GM12878 (cell line): ENCODE measurements at regions of chr1 and their contacts with region 1.

Region 1: DNA sequence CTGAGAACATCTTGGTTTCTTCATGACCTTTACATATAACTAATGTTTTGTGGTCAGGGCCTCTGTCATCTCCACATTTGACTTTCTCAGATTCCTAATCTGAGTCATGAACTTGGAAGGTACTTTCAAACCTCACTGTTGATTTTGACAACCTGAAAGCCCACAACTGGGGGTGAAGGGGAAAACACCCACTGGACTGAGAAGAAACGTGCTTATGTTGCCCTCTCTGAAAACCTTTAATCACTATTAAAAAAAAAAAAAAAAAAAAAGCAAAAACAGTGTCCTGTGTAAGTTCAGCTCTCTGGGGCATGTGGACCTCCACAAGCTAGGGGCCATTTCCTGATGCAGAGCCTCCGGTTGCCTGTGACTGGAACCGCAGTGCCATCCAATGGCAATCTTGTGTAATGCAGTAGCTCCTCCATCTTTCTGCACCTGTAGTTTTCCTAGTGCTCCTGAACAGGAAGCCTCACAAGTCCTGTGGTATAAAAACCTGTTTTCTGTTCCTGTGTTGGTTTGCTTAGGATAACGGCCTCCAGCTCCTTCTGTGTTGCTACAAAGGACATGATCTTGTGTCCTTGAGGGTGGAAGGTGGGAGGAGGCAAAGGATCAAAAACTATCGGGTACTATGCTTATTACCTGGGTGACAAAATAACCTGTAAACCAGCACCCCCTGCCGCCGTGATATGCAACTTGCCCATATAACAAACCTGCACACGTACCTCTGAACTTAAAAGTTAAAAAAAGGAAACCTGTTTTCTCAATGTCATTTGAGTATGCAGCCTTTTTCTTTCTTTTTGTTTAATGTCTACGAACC is 124.5 kb downstream of the ZNF648 start:
- DNase-seq: peak; percentile 86
- ATAC-seq: peak; percentile 90
- H3K4me3 ChIP-seq: no peak overlapping the region
- H3K27ac ChIP-seq: peak overlapping the region; percentile 82
- H3K4me1 ChIP-seq: peaks cover 16% of the 10 kb centered on the region
- H3K27me3 ChIP-seq: no peaks in the 10 kb centered on the region
- CTCF ChIP-seq: peak; percentile 83 to 91 (median 84)
- EP300 ChIP-seq: peak; percentile 92 to 95
- POLR2A ChIP-seq: no peak
- RAD21 ChIP-seq: peak; percentile 95

Region 2: DNA sequence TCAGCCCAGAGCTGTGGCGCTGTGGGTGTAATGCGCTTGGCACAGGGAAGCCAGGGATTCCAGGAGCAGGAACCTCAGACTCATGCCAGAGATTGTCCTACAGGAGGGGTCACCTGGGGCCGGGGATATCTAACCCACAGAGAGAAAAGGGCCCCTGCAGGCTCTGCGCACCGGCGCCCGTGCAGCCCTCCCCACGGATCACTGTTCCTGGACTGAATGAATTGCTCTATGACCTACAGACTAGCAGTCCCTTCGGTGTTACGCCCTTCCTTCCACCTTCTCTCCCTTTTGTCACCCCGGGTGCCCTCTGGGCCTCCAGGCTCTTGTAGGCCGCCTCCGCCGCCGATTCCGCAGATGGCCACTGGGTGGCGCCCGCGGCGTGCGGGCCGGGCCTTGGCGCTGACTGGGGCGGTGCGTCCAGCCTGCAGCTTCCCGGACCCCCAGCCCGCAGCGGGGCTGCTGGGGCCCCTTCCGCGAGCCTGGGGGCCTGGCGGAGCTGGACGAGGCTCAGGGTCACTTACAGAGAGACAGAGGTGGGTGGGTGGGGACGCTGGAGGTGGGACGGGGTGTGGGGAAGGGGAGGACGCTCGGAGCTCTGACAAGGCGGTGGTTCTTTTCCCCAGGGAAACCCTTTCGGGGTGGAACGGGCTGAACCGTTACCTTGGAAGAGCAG is 747.1 kb before region 1 on chr1:
- CTCF ChIA-PET with region 1: interaction called, 8 read pairs
- POLR2A ChIA-PET with region 1: no interaction called
- RAD21 ChIA-PET with region 1: interaction called, 23 read pairs
- SMC1A ChIA-PET with region 1: interaction called, 6 read pairs
- in situ Hi-C with region 1: loop called (anchors 10 kb)
- intact Hi-C with region 1: loop called (anchors 1 kb)
- DNase-seq: no peak
- ATAC-seq: peak; percentile 98
- H3K4me3 ChIP-seq: no peak overlapping the region
- H3K27ac ChIP-seq: no peak overlapping the region
- H3K4me1 ChIP-seq: no peaks in the 10 kb centered on the region
- H3K27me3 ChIP-seq: no peaks in the 10 kb centered on the region
- CTCF ChIP-seq: peak; percentile 95 to 98 (median 97)
- EP300 ChIP-seq: no peak
- POLR2A ChIP-seq: no peak
- RAD21 ChIP-seq: peak; percentile 99

Region 3: DNA sequence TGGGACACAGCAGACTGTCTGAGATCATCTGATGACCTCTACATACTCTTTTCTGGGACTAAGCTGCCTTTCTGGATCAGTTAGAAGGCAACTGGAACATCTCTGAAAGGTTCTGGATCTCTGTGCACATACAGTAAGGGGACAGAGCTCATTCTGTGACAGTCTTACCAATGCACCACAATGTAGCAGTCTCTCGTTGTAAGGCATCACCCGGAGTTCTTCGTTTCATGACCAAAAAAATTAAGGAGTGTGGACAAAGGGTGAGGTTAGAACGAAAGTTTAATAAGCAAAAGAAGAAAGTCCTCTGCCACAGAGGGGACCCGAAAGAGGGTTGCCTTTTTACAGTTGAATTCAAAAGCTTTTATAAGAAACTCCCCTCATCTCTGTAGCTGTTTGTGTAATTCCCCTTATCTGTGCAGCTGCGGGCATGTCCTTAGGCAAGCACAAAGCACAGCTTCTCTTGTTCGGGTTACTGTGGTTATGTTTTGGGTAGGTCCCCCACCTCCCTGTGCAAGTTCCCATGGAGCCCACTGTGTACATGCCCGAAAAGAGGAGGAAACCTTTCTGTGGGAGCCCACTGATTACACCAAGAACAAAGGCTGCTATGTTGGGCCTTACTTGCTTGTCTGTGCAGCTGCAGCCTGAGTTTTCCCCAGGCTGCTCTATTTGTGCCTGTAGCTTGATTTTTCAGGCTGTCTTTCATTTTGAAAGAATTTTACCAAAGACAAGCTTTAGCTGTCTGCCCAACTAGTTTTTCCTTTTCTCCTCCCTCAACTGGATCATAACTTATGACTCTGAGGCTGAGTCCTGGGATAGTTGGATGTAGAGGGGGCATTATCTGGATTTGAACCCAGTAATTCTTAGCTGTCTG is 506.7 kb before region 1 on chr1:
- CTCF ChIA-PET with region 1: interaction called, 47 read pairs
- POLR2A ChIA-PET with region 1: interaction called, 4 read pairs
- RAD21 ChIA-PET with region 1: interaction called, 41 read pairs
- SMC1A ChIA-PET with region 1: interaction called, 27 read pairs
- in situ Hi-C with region 1: no loop called
- intact Hi-C with region 1: loop called (anchors 2 kb)
- DNase-seq: peak; percentile 79
- ATAC-seq: peak; percentile 90
- H3K4me3 ChIP-seq: no peak overlapping the region
- H3K27ac ChIP-seq: peak overlapping the region; percentile 83
- H3K4me1 ChIP-seq: peaks cover 39% of the 10 kb centered on the region
- H3K27me3 ChIP-seq: no peaks in the 10 kb centered on the region; a peak in 1 of 4 replicates
- CTCF ChIP-seq: no peak
- EP300 ChIP-seq: peak; percentile 56 to 75
- POLR2A ChIP-seq: no peak
- RAD21 ChIP-seq: no peak

Region 4: GRCh38 chr1:181504399-181504842 is 432.6 kb before region 1 on chr1:
- CTCF ChIA-PET with region 1: interaction called, 6 read pairs
- POLR2A ChIA-PET with region 1: interaction called, 3 read pairs
- RAD21 ChIA-PET with region 1: interaction called, 12 read pairs
- SMC1A ChIA-PET with region 1: interaction called, 12 read pairs
- in situ Hi-C with region 1: no loop called
- intact Hi-C with region 1: loop called (anchors 2 kb)
- DNase-seq: no peak
- ATAC-seq: peak; percentile 77
- H3K4me3 ChIP-seq: peak overlapping the region; percentile 14; the same call in 1 of the 2 replicates
- H3K27ac ChIP-seq: peak overlapping the region; percentile 88
- H3K4me1 ChIP-seq: peaks cover 60% of the 10 kb centered on the region
- H3K27me3 ChIP-seq: no peaks in the 10 kb centered on the region
- CTCF ChIP-seq: peak; percentile 50 to 73 (median 70)
- EP300 ChIP-seq: no peak
- POLR2A ChIP-seq: peak; percentile 42
- RAD21 ChIP-seq: peak; percentile 55

Region 5: DNA sequence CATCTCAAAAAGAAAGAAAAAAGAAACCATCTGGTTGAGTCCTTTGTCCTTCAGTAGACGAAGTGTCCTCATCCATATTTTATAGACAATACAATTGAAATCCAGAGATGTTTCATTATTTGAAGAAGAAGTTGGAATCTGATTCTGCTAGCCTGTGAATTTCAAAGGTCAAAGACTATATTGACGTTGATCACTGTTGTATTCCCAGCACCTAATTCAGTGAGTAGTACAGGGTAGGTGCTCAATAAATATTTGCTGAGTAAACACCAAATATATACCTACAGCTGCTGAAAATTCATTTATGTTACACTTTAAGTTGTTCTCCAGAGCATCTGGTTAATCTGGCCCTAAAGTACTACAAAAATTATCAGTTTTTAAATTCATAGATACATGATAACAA is 318.4 kb before region 1 on chr1:
- CTCF ChIA-PET with region 1: no interaction called
- POLR2A ChIA-PET with region 1: no interaction called
- RAD21 ChIA-PET with region 1: no interaction called
- SMC1A ChIA-PET with region 1: no interaction called
- in situ Hi-C with region 1: no loop called
- intact Hi-C with region 1: no loop called
- DNase-seq: no peak
- ATAC-seq: no peak
- H3K4me3 ChIP-seq: no peak overlapping the region
- H3K27ac ChIP-seq: no peak overlapping the region
- H3K4me1 ChIP-seq: no peaks in the 10 kb centered on the region
- H3K27me3 ChIP-seq: no peaks in the 10 kb centered on the region
- CTCF ChIP-seq: no peak
- EP300 ChIP-seq: no peak
- POLR2A ChIP-seq: no peak
- RAD21 ChIP-seq: no peak

Region 6: DNA sequence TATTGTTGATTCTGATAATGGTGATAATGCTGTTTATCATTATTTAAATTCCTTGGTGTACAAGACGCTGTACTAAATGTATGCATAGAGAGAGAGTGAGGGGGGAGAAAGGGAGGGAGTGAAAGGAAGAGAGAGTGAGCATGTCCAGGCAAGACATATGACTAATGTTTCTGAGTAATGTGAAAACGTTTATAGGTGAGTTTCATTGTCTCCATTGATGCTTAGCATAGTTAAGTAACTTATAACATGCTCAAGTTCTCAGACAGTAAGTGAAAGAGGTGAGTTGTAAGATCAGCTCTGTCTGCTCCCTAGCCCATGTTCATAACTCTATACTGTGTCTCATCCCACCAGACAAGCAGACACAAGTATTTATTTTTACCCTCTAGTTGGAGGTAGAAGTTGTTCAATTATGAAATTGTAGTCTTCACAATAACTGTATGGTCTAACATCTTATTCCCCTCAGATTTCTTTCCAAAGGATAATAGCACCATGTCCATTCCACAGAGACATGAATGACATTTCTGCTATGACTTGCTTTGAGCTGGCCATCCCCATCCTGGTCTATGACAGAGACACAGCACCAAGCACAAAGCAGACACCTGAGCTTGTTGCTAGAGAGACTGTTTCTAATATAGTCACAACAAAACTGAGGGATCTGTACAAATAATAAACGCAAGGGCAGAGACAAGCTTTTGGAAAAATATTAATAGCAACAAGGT is 168.6 kb before region 1 on chr1:
- CTCF ChIA-PET with region 1: no interaction called
- POLR2A ChIA-PET with region 1: no interaction called
- RAD21 ChIA-PET with region 1: interaction called, 14 read pairs
- SMC1A ChIA-PET with region 1: interaction called, 4 read pairs
- in situ Hi-C with region 1: no loop called
- intact Hi-C with region 1: loop called (anchors 5 kb)
- DNase-seq: peak; percentile 4
- ATAC-seq: peak; percentile 82
- H3K4me3 ChIP-seq: no peak overlapping the region
- H3K27ac ChIP-seq: no peak overlapping the region
- H3K4me1 ChIP-seq: no peaks in the 10 kb centered on the region
- H3K27me3 ChIP-seq: no peaks in the 10 kb centered on the region
- CTCF ChIP-seq: no peak
- EP300 ChIP-seq: no peak
- POLR2A ChIP-seq: no peak
- RAD21 ChIP-seq: no peak

Region 7: DNA sequence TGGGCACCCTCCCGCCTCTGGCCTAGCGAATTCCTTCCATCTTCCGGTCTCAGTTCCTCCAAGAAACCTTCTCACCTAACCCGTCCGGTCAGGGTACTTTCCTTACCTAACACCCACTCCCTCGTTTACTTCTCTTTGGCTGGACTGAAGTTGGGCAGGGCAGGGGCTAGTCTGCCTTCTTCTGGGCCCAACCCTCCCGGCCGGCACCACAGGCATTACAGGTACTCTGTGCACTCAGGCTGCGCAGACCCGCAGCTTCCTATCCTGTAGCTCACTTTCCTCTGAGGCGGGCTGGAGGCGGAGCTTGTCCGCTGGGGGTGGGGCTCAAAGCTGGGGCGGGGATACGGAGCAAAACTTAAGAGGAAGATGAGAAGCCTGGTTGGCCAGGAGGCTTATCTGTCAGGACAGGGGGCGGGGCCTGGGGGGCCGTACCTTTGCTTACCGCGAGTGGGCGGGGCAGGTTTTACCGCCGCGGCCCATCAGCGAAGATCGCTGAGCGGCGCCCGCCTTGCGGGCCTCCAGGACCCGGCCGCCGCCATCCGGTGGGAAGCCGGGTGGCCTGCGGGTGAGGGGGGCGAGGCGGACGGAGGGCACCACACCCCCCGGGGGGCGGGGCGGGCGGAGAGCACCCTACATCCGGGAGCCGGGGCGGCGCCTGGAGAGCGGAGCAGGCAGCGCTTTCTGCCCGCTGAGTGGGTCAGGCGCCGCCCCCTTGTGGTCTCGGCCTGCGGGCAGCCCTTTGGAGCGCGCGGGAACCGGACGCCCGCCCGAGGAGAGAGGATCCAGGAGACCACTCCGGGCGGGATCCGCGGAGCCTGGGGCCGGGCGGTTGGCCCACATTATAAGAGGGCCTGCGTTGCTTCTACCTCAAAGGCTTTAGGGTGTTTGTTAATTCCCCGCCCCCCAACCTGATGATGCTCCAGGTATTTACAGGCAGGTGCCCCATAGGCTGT is 92.7 kb after region 1 on chr1:
- CTCF ChIA-PET with region 1: interaction called, 16 read pairs
- POLR2A ChIA-PET with region 1: no interaction called
- RAD21 ChIA-PET with region 1: interaction called, 8 read pairs
- SMC1A ChIA-PET with region 1: no interaction called
- in situ Hi-C with region 1: no loop called
- intact Hi-C with region 1: loop called (anchors 2 kb)
- DNase-seq: peak; percentile 83
- ATAC-seq: peak; percentile 97
- H3K4me3 ChIP-seq: peak overlapping the region; percentile 83
- H3K27ac ChIP-seq: peak overlapping the region; percentile 66
- H3K4me1 ChIP-seq: no peaks in the 10 kb centered on the region
- H3K27me3 ChIP-seq: no peaks in the 10 kb centered on the region
- CTCF ChIP-seq: peak; percentile 20 to 44 (median 30); a peak in 3 of 6 replicates
- EP300 ChIP-seq: no peak; a peak in 1 of 4 replicates
- POLR2A ChIP-seq: peak; percentile 91
- RAD21 ChIP-seq: 0 out of 2 replicates have a peak, but pooled peaks have one; percentile 8